ENCODE measurements at regions of chr11 and their contacts with region 1.

Region 1: GRCh38 chr11:19071255-19071654 is 10.7 kb upstream of the MRGPRX2 start:
- DNase-seq: peak; percentile 78
- ATAC-seq: peak; percentile 83 to 96

Region 2: DNA sequence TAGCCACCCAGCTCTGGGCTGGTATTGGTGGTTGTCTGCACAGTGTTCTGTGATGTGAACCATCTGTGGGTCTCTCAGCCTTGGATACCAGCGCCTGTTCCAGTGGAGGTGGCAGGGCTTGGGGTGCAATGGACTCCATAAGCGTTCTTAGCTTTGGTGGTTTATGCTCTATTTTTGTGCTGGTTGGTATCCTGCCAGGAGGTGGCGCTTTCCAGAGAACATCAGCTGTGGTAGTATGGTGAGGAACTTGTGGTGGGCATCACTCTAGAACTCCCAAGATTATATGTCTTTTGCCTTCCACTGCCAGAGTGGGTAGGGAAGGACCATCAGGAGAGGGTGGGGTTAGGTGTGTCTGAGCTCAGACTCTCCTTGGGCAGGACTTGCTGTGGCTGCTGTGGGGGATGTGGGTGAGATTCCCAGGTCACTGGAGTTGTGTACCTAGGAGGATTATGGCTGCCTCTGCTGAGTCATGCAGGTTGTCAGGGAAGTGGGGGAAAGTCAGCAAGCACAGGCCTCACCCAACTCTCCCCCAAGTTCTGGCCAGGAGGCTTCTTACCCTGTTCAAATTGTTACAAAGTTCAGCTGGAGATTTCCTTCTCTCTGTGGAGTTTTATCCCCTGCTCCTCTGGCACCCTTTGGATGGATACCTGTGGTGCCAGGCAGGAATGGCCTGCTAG is 57.9 kb before region 1 on chr11:
- intact Hi-C with region 1: no loop called
- DNase-seq: no peak
- ATAC-seq: no peak

Region 3: DNA sequence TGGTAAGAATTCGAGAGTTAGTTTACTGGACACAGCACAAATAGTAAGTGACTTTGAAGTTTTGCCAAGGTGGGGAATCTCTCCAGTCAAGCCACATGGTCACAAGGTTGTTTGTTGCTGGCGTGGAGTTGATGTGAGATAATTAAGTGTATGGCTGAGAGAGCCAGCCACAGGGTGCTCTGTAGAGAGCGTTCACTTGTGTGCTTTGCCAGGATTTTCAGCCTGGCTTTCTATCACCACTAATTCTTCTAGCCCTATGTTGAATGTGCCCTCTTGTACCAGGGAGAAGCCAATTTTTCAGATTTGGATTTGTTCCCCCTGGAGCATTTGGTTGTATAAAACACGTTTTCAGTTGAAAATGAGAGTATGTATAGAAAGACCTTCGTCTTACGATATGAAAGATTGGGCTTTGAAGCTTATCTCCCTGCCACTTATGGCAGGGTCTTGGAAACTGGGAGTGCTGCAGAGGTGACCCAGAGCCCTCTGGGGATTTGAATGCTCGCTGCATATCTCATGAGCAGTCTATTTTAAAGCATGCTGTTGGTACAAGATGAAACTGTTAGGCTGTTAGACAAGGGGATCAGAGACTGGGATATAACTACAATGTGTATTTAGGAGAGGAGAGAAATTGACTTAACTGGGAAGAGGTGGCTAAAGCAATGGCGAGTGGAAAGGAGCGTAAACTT is 101.9 kb after region 1 on chr11:
- intact Hi-C with region 1: loop called in 1 of 2 experiments (anchors 10 kb)
- DNase-seq: no peak
- ATAC-seq: peak; percentile 80 to 89

Region 4: DNA sequence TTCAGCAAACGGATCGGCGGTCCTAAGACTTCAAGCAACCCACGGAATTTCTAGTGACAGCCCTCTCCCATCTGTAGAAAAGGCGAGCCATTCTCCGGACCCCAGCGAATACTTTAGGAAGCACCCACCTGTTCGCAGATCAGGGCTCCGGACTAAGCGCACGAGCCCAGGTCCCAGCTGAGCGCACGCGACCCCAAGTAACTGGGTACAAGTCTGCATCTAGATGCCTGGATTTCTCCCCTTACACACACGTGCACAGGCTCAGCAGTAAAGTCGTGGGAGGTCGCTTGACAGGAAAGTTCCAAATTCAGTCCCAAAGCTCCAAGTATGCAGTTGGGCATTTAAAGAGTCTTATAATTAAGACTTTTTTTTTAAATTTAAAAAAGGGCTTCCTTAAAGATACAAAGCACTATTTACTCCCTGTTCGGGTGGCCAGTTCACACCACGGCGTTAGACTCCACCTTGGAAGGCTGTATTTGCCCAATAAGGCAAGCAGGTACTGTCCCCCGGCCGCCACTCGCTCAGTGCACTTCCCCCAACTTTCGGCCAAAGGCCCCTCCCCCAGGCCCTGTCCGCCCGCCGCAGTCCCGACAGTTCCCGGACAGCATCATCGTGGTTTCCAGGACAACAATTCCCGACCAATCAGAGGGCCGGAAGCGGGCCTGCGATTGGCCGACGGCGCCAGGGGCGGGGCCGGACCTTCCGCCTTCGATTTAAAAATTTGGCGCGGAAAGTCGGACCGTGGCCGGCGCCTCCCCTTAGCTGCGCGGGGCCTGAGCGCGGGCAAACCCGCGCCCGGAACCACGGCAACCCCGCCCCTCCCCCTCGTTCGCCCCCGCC is 169.4 kb after region 1 on chr11 and contains the start of gene E2F8:
- intact Hi-C with region 1: loop called in 1 of 2 experiments (anchors 10 kb)
- DNase-seq: peak; percentile 94
- ATAC-seq: peak; percentile 98 to 99
- total RNA-seq, gene E2F8: 3.4 to 4.2 TPM

Region 5: GRCh38 chr11:19306179-19306944 is 235.1 kb after region 1 on chr11:
- intact Hi-C with region 1: loop called in 1 of 2 experiments (anchors 5 kb)
- DNase-seq: no peak
- ATAC-seq: no peak

Region 6: DNA sequence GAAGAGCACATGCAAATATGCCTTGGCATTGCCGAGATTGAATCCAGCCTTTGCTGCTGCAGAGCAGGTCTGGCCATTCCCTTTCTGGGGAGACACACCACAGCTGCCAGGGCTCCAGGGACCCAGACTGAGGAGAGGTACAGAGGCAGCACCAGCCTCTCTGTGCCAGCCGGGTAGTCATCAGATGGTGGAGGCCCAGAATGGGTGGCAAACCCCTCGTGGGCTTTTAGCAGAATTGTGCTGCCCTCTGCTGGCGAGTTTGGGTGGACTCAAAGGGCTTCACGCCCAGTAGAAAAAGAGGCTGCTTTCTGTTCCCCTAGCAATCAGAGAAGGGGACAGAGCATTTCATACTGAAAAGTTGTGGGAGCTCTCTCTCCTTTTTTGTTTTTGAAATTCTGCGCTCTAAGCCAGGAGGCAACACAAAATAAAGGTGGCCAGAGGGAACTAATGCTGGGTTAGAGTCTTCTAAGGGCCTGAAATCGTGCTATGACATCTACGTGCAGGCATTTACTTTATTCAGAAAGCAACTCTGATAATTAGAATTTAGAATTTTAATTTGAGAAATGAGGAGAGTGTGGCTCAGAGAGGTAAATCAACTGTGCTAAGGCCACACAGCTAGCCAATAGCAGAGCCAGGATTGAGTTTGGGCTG is 482.6 kb after region 1 on chr11:
- intact Hi-C with region 1: loop called (anchors 1 to 5 kb)
- DNase-seq: peak; percentile 84
- ATAC-seq: peak; percentile 87 to 88

Measured in left cardiac atrium (tissue), 4 donors.